PC-3 (cell line): ENCODE measurements at regions of chr5 and their contacts with region 1.

Region 1: DNA sequence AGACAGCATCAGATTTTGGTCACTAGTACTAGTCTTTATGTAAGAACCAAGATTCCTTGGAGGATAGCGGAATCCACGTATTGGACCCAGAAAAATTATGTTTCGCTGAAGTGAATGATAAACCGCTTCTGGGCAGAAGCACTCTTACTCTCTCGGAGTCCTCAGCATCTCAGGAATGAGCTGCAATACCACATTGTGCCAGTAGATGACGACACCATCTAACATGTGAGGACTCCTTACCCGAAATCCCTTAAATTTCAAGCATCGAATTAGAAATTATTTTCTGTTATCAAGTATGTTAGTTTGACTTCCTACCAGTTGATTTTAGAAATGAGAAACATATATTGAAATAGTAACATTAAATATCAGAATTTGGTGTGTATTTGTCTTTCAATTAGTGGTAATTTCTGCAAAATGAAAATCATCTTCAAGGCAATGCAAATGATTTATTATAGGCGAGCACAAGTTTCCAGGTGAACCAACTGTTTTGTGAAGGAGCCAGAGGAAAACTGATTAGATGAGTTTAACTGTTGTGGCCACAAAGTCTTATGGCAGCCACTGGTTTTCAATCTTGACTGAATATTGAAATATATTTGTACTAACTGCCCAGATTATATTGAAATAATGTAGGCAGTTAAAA is 66.0 kb upstream of the CAMK4 start:
- DNase-seq: peak; percentile 92
- ATAC-seq: peak; percentile 84
- H3K4me3 ChIP-seq: no peak overlapping the region
- H3K27ac ChIP-seq: no peak overlapping the region
- H3K4me1 ChIP-seq: no peaks in the 10 kb centered on the region
- H3K27me3 ChIP-seq: no peaks in the 10 kb centered on the region
- CTCF ChIP-seq: peak; percentile 98

Region 2: DNA sequence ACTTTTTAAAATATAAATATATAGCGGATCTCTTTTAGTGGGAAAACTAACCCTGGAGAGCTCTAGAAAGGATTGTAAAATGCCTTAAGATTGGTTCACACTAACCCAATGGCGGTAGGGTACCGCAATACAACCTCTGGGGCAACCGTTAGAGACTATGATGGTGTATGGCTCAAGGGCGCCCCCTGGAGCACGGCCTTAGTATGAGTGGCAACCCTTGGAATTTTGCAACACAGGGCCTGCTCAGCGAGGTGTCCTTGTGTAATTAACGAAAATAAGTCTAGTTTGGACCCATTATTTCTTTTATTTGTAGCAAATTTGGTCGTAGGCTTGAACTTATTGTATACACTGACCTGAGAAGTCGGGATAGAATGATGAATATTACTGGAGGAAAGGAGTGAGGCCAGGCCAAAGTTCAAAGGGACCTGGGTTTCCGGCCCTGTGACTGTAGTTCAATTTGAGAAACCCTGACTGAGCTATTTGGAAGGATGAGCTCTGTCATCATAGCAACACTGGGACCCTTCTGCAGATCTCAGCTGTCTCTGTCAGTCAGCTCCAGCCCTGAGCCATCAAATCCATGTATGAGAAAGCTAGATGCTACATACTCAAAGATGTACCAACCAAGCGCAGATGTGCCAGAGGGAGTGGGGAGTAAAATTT is 120.8 kb after region 1 on chr5:
- CTCF ChIA-PET with region 1: no interaction called
- POLR2A ChIA-PET with region 1: no interaction called
- intact Hi-C with region 1: loop called (anchors 1 kb)
- DNase-seq: peak; percentile 65
- ATAC-seq: peak; percentile 82
- H3K4me3 ChIP-seq: no peak overlapping the region
- H3K27ac ChIP-seq: no peak overlapping the region
- H3K4me1 ChIP-seq: no peaks in the 10 kb centered on the region
- H3K27me3 ChIP-seq: peaks cover 9% of the 10 kb centered on the region
- CTCF ChIP-seq: peak; percentile 92

Region 3: GRCh38 chr5:111401906-111402305 is 243.7 kb after region 1 on chr5:
- CTCF ChIA-PET with region 1: interaction called, 3 read pairs
- POLR2A ChIA-PET with region 1: no interaction called
- intact Hi-C with region 1: loop called (anchors 5 kb)
- DNase-seq: peak; percentile 23
- ATAC-seq: peak; percentile 37; the same call in 1 of the 2 replicates
- H3K4me3 ChIP-seq: no peak overlapping the region
- H3K27ac ChIP-seq: no peak overlapping the region
- H3K4me1 ChIP-seq: no peaks in the 10 kb centered on the region
- H3K27me3 ChIP-seq: peaks cover 68% of the 10 kb centered on the region
- CTCF ChIP-seq: peak; percentile 47; the same call in 1 of the 2 replicates

Region 4: GRCh38 chr5:111461255-111461671 is 303.0 kb after region 1 on chr5:
- CTCF ChIA-PET with region 1: interaction called, 4 read pairs
- POLR2A ChIA-PET with region 1: no interaction called
- intact Hi-C with region 1: loop called (anchors 2 kb)
- DNase-seq: peak; percentile 44
- ATAC-seq: peak; percentile 89
- H3K4me3 ChIP-seq: no peak overlapping the region
- H3K27ac ChIP-seq: no peak overlapping the region
- H3K4me1 ChIP-seq: no peaks in the 10 kb centered on the region
- H3K27me3 ChIP-seq: peaks cover 43% of the 10 kb centered on the region
- CTCF ChIP-seq: peak; percentile 66

Region 5: GRCh38 chr5:111478266-111478665 is 320.0 kb after region 1 on chr5:
- CTCF ChIA-PET with region 1: interaction called, 3 read pairs
- POLR2A ChIA-PET with region 1: no interaction called
- intact Hi-C with region 1: loop called (anchors 1 kb)
- DNase-seq: no peak
- ATAC-seq: no peak
- H3K4me3 ChIP-seq: no peak overlapping the region
- H3K27ac ChIP-seq: no peak overlapping the region
- H3K4me1 ChIP-seq: no peaks in the 10 kb centered on the region
- H3K27me3 ChIP-seq: peaks cover 9% of the 10 kb centered on the region; the same call in 1 of the 2 replicates
- CTCF ChIP-seq: peak; percentile 33; the same call in 1 of the 2 replicates